Psoas muscle (tissue), 8 donors: ENCODE measurements at regions of chr1 and their contacts with region 1.

Region 1: DNA sequence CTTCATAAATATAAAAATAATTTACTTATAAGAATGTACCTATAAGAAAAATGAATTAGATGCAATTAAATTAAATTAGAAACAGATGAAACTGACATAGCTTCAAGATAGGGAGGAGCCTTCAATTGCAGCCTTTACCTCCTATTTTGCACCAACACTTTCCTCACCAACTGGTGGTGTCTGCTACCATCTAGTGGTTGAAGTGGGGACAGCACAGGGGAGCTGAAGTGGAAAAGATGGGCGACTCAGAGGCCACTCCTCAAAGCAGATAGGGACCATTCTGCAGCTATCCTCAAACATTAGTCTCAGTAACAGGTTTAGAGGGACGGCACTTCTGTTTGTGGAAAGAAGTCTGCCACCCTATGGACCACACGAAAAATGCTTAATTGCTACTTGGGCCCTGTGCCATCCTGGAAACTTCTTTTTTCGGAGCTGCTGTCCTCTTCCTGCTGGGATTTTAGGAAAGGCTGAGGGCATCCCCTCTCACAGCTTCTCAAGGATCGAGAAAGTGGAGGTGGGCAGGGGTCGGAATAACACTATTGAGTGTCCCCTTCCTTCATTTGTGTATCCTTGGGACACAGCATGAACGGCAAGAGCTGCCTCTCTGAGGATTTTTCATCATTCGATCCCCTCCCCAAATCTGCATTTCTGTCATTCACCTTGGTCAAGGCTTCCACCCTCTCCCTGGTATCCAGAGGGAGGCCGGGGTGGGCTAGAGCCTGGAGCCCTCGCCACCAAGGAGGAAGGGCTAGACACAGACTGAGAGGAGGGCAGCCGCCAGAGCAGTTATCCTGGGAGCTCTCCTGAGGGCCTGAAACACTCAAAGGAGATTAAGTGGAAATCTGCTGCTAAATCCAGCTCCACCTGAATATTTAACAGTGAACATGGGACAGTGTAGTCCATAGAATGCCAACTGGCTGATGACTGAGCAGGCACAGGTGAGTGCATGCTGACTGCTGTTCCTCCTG is 9.6 kb downstream of the PROK1 start:
- DNase-seq: peak; percentile 64 to 78
- ATAC-seq: peak; percentile 89 to 96 (median 93)
- H3K4me3 ChIP-seq: no peak overlapping the region
- H3K27ac ChIP-seq: no peak overlapping the region
- H3K4me1 ChIP-seq: no peaks in the 10 kb centered on the region
- H3K27me3 ChIP-seq: no peaks in the 10 kb centered on the region
- CTCF ChIP-seq: peak; percentile 98

Region 2: DNA sequence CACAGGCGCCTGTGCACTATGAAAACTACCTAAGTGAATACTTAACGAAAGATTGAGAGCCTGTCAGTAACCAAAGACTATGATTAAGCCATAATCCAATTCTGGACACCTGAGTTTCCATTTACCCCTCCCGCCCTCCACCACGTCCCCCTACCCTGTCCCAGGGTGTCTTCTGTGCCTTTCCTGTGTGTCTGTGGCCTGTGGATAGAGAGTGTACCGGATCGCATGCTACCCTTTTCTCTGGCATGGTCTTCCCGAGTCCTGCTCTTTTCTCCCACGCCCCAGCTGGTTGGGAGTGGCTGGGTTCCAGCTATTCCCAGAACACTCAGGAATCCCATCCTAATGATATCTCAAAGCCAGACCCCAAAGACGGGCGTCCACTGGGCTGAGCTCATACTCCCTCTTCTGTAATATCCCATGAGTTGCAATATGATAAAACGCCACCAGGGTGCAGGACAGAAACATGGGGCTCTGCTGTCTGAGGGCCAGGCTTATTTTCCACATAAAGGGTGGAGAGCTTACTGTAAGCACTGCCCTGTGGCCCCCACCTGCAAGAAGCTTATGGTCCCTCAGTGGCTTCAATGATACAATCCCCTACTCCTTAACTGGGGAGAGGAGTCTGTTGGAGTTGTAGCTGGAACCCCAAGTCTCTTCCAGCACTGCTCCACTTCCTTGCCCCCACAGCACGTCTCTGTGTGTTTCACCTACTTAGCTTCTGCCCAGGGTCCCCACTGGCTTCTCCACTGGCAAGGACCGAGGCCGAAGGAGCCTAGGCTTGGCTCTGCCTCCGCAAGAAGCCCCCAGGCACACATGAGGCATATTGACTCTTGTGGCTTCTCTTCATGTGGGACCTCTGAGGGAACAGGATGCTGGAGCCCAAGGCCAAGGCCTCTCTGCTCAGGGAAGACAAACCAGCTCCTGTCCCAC is 372.5 kb before region 1 on chr1:
- intact Hi-C with region 1: no loop called
- DNase-seq: peak in 1 of 2 donors; percentile 47
- ATAC-seq: peak; percentile 61 to 77 (median 74)
- H3K4me3 ChIP-seq: no peak overlapping the region
- H3K27ac ChIP-seq: no peak overlapping the region
- H3K4me1 ChIP-seq: peaks cover 6% of the 10 kb centered on the region
- H3K27me3 ChIP-seq: peaks cover 0 to 45% (median 13%) of the 10 kb centered on the region in 3 donors
- CTCF ChIP-seq: peak; percentile 69

Region 3: DNA sequence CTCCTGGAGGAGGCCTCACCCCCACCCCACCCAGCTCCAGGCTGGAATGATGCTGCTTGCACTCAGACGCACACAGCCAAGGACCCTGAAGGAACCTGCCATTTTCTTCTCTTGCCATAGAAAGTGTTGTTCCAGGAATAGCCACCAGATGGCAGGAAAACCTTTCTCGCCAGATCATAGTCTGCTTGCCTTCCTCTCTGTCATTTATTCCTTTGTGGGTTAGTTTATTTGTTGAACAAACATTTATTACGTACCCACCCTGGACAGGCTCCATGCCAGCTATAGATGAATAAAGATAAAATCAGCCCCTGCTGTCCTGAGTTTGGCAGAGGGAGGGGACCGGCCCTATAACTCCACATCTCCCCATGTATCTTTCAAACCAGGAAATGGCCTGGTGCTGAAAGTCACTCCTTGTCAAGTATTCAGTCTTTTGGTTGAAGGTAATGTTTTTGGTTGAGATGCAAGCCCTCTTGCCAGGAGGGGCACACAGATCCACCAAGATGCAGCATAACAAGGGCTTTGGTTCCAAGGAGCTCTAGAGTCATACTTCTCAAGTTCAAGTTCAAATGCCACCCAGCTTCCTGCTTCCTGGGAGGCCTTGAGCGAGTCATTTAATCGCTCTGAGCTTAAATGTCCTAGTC is 257.4 kb before region 1 on chr1:
- intact Hi-C with region 1: loop called (anchors 2 kb)
- DNase-seq: no peak
- ATAC-seq: peak; percentile 58 to 83 (median 68)
- H3K4me3 ChIP-seq: no peak overlapping the region
- H3K27ac ChIP-seq: no peak overlapping the region
- H3K4me1 ChIP-seq: no peaks in the 10 kb centered on the region
- H3K27me3 ChIP-seq: no peaks in the 10 kb centered on the region
- CTCF ChIP-seq: peak; percentile 89

Region 4: DNA sequence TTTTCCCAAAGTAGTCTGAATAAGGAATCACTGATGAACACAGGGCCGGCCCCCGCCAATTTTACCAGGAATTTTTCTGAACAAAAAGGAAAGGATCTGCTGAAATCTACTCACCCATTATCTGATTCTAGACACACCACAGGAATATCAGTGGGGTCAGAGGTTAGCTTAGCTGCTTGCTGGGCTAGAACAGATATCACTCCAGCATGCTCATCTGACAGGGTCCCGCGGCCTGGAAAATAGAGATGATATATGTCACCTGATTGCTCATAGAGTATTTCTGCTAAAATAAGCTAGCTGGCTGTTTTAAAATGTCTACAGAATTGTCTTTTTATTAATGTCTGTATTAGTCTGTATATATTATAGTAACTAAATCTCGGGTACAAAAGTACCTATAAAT is 56.7 kb before region 1 on chr1:
- intact Hi-C with region 1: no loop called
- DNase-seq: no peak
- ATAC-seq: no peak
- H3K4me3 ChIP-seq: no peak overlapping the region
- H3K27ac ChIP-seq: no peak overlapping the region
- H3K4me1 ChIP-seq: peaks cover 16% of the 10 kb centered on the region
- H3K27me3 ChIP-seq: no peaks in the 10 kb centered on the region
- CTCF ChIP-seq: no peak